ENCODE measurements at regions of chr2 and their contacts with region 1.

Region 1: GRCh38 chr2:153871231-153872221 is at the start of gene GALNT13:
- DNase-seq: peak; percentile 70 to 93 (median 90)
- H3K4me3 ChIP-seq: peak within 1 kb of the TSS; percentile 46 to 84 (median 72)
- H3K27ac ChIP-seq: peak within 1 kb of the TSS; percentile 59 to 97 (median 89)
- H3K27me3 ChIP-seq: peaks cover 0 to 16% (median 0%) of the 10 kb centered on the region in 45 donors
- CTCF ChIP-seq: peak in 13 of 56 donors; percentile 2 to 33 (median 15)
- total RNA-seq, gene GALNT13: 8.3 to 41.6 (median 20.5) TPM

Region 2: DNA sequence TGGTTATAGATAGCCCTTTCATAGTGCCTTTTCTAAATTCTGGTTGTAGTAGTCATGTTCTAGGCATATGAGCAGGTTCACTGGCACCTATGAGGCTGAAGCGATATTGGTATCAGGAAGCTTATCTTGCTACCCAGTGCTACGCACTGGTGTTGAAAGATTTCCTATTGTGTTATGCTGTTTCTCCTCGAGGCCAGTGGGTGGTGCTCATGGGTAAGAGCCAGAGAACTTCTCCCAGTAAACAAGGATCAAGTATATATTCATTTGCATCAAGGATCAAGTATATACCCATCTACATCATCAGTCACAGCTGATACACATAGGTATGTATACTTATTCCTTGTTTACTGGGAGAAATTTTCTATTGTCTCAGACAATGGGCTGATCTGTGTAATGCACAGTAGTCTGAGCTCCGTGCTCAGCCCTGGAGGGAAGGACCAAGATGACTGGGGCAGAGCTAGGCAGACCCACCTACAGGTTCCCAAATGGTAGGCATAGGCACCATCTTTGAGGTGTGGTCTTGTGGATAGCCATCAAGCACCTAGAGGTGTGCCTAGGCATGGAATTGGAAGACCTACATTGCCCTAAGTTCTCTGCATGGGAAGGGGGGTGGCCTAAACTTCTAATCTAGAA is 101.1 kb before region 1 on chr2:
- intact Hi-C with region 1: loop called in 1 of 2 experiments (anchors 5 kb)
- DNase-seq: no peak
- H3K4me3 ChIP-seq: no peak overlapping the region
- H3K27ac ChIP-seq: no peak overlapping the region
- H3K27me3 ChIP-seq: peaks cover 0 to 5% (median 0%) of the 10 kb centered on the region in 45 donors
- CTCF ChIP-seq: peak in 50 of 56 donors; percentile 19 to 74 (median 50)

Region 3: DNA sequence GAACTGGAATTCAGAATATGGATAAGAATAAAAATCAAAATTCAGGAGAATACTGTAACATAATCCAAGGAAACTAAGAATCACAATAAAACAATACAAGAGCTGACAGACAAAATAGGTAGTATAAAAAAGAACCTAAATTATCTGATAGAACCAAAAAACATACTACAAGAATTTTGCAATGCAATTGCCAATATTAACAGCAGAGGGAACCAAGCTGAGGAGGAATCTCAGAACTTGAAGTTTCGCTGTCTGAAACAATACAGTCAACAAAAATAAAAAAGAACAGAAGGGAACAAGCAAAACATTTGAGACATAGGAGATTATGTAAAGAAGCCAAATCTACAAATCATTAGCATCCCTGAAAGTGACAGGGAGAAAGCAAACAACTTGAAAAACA is 83.9 kb before region 1 on chr2:
- intact Hi-C with region 1: loop called in 1 of 2 experiments (anchors 5 kb)
- DNase-seq: no peak
- H3K4me3 ChIP-seq: no peak overlapping the region
- H3K27ac ChIP-seq: no peak overlapping the region
- H3K27me3 ChIP-seq: no peaks in the 10 kb centered on the region
- CTCF ChIP-seq: peak in 45 of 56 donors; percentile 9 to 71 (median 38)

Region 4: DNA sequence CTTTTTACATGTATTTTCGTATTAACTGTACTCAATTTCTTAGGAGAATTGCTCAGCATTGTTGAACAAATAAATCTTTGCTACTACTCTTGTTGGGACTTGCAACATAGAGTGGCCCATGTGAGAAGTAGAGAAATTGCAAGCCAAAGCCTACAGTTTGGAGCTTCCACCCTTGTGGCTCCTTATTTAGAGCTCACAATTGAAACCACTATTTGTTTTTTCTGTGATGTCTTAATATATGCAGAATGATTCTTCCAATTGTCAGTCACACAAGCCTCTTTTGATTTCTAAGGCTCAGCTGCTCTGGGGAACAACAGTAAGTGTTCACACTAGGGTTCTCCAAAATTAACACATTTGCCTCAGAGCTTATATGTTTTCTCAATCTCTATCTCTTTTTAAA is 60.0 kb before region 1 on chr2:
- intact Hi-C with region 1: loop called in 1 of 2 experiments (anchors 5 kb)
- DNase-seq: no peak
- H3K4me3 ChIP-seq: peak overlapping the region in 5 of 59 donors; percentile 3 to 26 (median 17)
- H3K27ac ChIP-seq: peak overlapping the region in 57 of 59 donors; percentile 0 to 92 (median 76)
- H3K27me3 ChIP-seq: no peaks in the 10 kb centered on the region
- CTCF ChIP-seq: peak in 2 of 56 donors; percentile 11 to 20

Region 5: GRCh38 chr2:154375579-154375931 is 504.0 kb after region 1 on chr2:
- intact Hi-C with region 1: loop called (anchors 5 kb)
- DNase-seq: peak in 2 of 10 donors; percentile 10 to 11
- H3K4me3 ChIP-seq: peak overlapping the region in 56 of 59 donors; percentile 10 to 61 (median 38)
- H3K27ac ChIP-seq: peak overlapping the region in 13 of 59 donors; percentile 6 to 52 (median 20)
- H3K27me3 ChIP-seq: no peaks in the 10 kb centered on the region
- CTCF ChIP-seq: peak in 55 of 56 donors; percentile 45 to 85 (median 70)